GM10248 (cell line): ENCODE measurements at regions of chr16 and their contacts with region 1.

Region 1: DNA sequence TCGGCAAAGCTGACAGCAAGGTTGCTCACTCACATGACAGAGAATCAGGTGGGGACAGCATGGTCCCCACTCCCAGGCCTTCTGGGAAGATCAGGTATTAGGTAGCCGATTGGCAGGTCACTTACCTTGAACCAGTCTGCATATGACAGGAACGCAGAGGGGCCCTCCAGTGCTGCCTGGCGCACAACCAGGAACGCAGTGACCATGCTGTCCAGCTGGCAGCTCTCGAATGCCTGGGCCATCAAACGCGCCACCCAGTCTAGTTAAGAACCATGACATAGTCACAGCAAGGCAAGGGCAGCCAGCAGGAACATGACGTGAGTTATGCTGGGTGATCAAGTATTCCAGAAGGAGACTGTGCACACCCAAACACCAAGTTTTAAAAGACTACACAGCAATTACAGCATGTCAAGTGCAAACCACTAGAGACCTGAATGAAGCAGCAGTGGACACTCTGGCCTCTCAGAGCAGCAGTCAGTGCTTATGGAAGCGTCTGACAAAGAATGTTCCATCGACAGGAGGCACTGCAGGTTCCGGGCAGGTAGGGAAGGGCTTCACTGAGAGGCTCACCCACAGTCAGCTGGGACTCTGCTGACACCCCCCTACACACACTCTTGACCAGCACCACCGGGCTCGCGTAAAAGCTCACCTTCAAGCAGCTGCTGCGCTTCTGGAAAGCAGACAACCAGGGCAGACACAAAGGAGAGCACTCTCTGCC is 25.0 kb downstream of the FANCA start:
- DNase-seq: no peak
- CTCF ChIP-seq: no peak

Region 2: GRCh38 chr16:89711601-89712273 is 79.7 kb before region 1 on chr16:
- CTCF ChIA-PET with region 1: interaction called, 115 read pairs
- POLR2A ChIA-PET with region 1: no interaction called
- DNase-seq: peak; percentile 96
- CTCF ChIP-seq: no peak

Region 3: DNA sequence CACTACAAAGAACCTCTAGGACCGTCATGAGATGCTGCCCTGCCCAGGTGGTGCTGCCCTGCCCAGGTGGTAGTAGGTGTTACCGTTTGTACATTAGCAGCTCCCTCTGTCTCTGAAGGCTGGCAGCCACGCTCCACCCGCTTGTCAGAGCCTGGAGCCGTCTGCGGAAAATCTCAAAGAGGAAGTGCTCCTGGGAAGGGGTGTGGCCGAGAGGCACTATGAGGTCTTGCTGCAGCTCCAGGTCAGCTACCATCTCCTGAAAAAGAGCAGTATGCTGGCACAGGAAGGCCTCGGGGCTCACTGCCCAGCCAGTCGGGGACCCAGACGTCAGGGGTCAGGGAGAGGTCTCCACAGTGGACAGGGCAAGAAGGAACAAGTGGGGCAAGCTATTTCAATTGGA is 41.8 kb before region 1 on chr16:
- CTCF ChIA-PET with region 1: interaction called, 15 read pairs
- POLR2A ChIA-PET with region 1: no interaction called
- DNase-seq: no peak
- CTCF ChIP-seq: no peak

Region 4: DNA sequence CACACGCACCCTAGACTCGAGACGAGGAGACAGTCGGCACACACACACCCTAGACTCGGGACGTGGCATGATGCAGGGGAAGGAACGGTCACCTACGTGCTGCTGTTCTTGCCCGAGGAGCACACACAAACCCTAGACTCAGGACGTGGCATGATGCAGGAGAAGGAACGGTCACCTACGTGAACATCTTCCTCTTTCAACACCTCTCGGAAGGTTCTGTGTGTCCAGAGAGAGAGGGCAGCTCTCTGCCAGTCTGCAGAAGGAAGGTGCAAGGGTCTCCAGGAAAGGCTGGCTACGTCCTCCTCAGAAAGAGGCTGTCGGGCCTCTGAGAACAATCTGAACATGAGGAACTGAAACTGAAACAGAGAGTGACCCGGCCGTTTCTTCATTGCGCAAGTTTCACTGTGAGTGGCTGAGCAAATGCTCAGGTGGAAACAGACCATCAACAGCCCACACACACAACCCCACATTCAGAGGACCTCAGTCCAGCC is 26.7 kb before region 1 on chr16:
- CTCF ChIA-PET with region 1: interaction called, 14 read pairs
- POLR2A ChIA-PET with region 1: no interaction called
- DNase-seq: peak; percentile 86
- CTCF ChIP-seq: no peak